Activated CD8-positive, alpha-beta T cell treated with anti-CD3 and anti-CD28 coated beads for 36 hours (primary cell): ENCODE measurements at regions of chr17 and their contacts with region 1.

Region 1: GRCh38 chr17:38415250-38416194 is 12.7 kb upstream of the ARHGAP23 start:
- DNase-seq: peak; percentile 67
- ATAC-seq: peak; percentile 71
- H3K4me3 Mint-ChIP-seq: peak overlapping the region; percentile 72
- H3K27ac Mint-ChIP-seq: peak overlapping the region; percentile 93
- H3K4me1 Mint-ChIP-seq: peaks cover 17% of the 10 kb centered on the region
- H3K27me3 Mint-ChIP-seq: peaks cover 34% of the 10 kb centered on the region
- CTCF ChIP-seq: no peak

Region 2: GRCh38 chr17:38333635-38334295 is 81.8 kb before region 1 on chr17:
- CTCF ChIA-PET with region 1: interaction called, 17 read pairs
- POLR2A ChIA-PET with region 1: no interaction called
- intact Hi-C with region 1: no loop called
- DNase-seq: peak; percentile 77
- ATAC-seq: peak; percentile 91
- H3K4me3 Mint-ChIP-seq: no peak overlapping the region
- H3K27ac Mint-ChIP-seq: no peak overlapping the region
- H3K4me1 Mint-ChIP-seq: no peaks in the 10 kb centered on the region
- H3K27me3 Mint-ChIP-seq: no peaks in the 10 kb centered on the region
- CTCF ChIP-seq: peak; percentile 82

Region 3: DNA sequence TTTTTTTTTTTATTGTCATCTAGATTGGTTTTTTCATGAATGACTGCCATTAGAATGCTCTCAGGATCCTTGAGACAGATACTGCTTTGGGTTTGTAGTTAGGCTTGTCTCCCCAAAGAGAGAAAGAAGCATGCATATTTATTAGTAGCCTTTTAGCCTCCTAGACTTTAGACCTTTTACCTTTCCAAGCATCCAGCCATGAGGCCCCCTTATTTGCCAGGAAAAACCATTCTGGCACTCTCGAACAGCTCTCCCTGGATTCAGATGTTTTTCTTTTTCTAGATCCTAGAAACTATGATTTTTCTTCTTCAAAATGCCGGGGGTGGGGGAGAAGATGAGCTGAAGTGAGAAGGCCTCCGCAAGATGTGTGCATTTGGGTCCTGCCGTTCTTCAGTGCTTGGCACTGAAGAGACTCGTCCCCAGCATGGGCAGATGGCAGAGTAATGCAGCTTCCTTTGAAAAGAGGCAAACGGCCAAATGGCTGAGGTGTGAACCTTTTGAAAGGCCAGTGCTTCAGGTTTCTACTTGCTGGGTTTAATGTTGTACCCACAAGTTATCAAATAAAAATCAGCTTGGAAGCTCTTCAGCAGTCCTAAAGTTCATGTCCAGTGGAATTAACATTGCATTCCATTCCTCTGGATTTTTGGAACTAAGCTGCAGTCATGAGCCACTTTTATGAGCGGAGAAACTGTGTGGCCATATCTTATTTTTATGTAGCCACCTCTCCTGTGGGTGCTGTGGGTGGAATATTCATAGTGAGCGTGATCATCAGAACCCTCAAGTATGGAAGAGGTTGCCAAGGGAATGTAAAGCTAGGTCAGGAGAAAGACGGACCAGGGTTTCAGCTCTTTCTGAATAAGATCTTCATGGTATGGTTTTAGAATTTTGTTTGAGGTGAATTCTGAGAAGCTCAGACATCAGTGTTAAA is 56.7 kb before region 1 on chr17:
- CTCF ChIA-PET with region 1: interaction called, 203 read pairs
- POLR2A ChIA-PET with region 1: interaction called, 5 read pairs
- intact Hi-C with region 1: no loop called
- DNase-seq: no peak
- ATAC-seq: no peak
- H3K4me3 Mint-ChIP-seq: no peak overlapping the region
- H3K27ac Mint-ChIP-seq: no peak overlapping the region
- H3K4me1 Mint-ChIP-seq: peaks cover 34% of the 10 kb centered on the region
- H3K27me3 Mint-ChIP-seq: no peaks in the 10 kb centered on the region
- CTCF ChIP-seq: no peak

Region 4: DNA sequence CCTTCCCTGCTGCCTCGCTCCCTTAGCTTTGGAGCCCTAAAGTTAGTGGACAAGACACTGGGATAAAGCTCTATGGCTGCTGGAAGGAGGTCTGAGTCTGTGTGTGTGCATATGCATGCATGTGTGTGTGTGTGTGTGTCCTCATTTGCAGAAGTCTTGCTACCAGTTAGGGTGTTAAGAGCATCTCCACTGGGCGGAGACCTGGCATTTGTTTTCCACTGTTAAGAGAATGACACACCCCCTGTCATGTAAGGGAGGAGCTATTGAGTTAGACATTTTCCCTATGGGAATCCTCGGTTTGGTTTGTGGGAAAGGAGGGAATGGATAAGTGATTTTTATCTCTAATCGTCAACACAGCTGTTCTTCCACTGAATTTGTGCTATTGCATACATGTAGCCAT is 12.0 kb before region 1 on chr17:
- CTCF ChIA-PET with region 1: interaction called, 10 read pairs
- POLR2A ChIA-PET with region 1: no interaction called
- intact Hi-C with region 1: no loop called
- DNase-seq: no peak
- ATAC-seq: no peak
- H3K4me3 Mint-ChIP-seq: no peak overlapping the region
- H3K27ac Mint-ChIP-seq: no peak overlapping the region
- H3K4me1 Mint-ChIP-seq: no peaks in the 10 kb centered on the region
- H3K27me3 Mint-ChIP-seq: no peaks in the 10 kb centered on the region
- CTCF ChIP-seq: no peak